ENCODE measurements at regions of chr9 and their contacts with region 1.

Region 1: DNA sequence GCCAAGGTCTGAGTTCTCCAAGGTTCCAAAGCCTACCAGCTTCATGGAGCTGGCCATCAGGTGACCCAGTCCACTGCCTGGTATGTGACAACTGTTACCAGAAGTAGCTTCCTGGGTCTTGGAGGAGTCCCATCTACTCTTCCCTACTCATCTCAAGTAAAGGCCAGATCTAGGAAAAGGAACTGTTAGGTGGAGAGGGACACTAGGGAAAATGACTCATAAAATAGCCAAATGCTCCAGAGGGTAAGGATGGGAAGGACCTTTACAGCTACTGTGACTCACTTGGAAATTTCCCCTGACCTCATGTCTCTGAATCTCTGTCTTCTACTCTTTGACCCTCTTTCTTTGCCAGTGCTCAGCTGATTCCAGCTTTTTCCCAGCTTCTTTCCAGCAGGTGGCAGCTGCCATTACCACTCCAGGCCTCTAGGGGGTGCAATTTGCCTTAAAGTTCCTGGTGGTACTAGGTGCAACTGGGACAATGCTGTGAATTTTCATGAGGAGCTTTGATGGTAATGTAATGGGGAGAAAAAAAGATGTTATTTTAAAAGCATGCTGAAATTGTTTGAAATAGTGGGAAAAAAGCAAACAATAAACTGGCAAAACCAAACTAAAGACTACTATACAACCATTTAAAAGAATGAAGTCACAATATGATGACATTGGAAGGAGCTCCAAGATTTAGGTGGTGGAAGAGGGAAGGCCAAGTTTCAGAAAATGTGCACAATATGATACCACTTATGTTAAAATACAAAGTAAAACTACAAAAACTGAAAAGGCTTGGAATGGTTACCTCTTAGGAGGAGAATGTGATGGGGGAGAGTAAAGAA is 27.1 kb upstream of the MYORG start:
- DNase-seq: no peak
- ATAC-seq: peak; percentile 52

Region 2: DNA sequence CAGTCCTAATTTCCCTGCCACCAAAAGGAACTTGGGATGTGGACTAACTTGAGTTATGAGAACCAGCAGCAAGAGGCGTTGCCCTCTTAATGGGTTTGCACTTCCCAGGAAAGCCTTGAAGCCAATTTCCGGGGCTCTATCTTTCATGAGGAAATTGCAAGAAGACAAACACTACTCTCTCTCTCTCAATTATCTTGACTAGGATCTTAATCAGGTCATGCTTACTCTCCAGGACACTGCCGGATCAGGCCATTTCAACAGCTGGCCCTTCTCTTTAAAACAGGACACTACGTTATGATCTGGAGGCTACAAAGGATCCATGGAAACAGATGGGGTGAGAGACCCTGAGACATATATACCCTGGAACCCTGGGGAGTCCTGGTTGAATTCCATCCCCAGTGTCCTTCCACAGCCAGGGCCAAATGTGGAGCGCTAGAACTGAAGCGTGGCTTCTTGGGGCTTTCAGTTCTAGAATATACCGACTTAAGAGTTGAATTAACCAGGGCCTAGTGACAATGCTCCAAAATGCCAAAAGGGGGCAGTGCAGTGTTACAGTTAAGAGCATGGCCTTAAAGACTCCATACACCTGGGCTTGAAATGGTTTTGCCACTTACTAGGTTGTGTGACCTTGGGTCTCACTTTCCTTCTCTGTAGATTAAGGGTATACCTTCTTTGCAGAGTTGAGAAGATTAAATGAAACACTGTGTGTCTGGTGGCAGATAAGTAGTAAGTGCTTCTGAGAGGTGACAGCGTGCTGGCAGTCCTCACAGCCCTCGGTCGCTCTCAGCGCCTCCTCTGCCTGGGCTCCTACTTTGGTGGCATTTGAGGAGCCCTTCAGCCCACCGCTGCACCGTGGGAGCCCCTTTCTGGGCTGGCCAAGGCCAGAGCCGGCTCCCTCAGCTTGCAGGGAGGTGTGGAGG is 33.5 kb after region 1 on chr9:
- intact Hi-C with region 1: loop called (anchors 5 kb)
- DNase-seq: no peak
- ATAC-seq: peak; percentile 73

Region 3: DNA sequence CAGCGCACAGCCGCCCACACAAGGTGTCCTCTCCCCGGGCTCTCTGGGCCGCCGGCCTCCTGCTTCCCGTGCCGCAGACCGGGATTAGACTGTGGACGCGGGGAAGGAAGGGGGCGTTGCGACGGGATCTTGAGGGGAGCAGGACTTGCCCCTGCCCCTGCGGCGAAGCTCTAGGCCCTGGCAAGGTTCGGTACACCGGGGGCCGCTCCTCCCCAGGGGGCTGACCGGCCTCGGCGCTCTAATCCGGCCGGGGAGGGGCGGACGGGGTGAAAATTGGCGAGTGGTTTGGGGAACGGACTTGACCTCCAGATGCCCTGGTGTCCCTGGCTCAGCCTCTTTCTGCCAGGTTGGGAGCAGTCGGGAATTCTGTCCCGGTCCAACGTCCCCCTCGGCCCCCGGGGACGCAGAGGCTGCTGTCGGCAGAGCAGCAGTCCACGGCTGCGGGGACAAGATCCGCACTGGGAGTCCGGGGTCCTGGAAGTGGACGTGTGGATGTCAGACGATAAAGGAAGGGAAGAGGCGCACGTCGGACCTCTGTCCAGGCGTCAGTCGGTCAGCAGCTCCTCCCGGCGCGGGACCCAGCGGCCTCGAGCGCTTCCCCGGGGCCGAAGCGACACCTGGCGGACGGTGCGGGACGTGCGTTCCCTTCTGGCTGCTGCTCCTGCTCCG is 187.6 kb after region 1 on chr9:
- intact Hi-C with region 1: loop called (anchors 10 kb)
- DNase-seq: peak; percentile 93
- ATAC-seq: peak; percentile 74

Region 4: GRCh38 chr9:34701769-34702736 is 298.3 kb after region 1 on chr9:
- intact Hi-C with region 1: no loop called
- DNase-seq: peak; percentile 92
- ATAC-seq: peak; percentile 94

Measured in Right ventricle myocardium inferior (tissue), 1 donor.